PC-9 (cell line): ENCODE measurements at regions of chr15 and their contacts with region 1.

Region 1: GRCh38 chr15:67065444-67066093 is at the start of gene SMAD3:
- DNase-seq: peak; percentile 73 to 92
- H3K4me3 ChIP-seq: peak within 1 kb of the TSS; percentile 88
- H3K27ac ChIP-seq: peak within 1 kb of the TSS; percentile 87
- H3K4me1 ChIP-seq: peaks cover 21% of the 10 kb centered on the region
- H3K27me3 ChIP-seq: no peaks in the 10 kb centered on the region
- CTCF ChIP-seq: no peak
- total RNA-seq, gene SMAD3: 99.5 and 109 TPM in 2 replicates

Region 2: GRCh38 chr15:66298803-66299251 is 766.7 kb before region 1 on chr15:
- CTCF ChIA-PET with region 1: no interaction called
- POLR2A ChIA-PET with region 1: no interaction called
- intact Hi-C with region 1: no loop called
- DNase-seq: no peak
- H3K4me3 ChIP-seq: no peak overlapping the region
- H3K27ac ChIP-seq: no peak overlapping the region
- H3K4me1 ChIP-seq: peaks cover 16% of the 10 kb centered on the region
- H3K27me3 ChIP-seq: no peaks in the 10 kb centered on the region
- CTCF ChIP-seq: no peak

Region 3: GRCh38 chr15:66963711-66964110 is 101.9 kb before region 1 on chr15:
- CTCF ChIA-PET with region 1: no interaction called
- POLR2A ChIA-PET with region 1: interaction called, 11 read pairs
- intact Hi-C with region 1: no loop called
- DNase-seq: no peak
- H3K4me3 ChIP-seq: no peak overlapping the region
- H3K27ac ChIP-seq: no peak overlapping the region
- H3K4me1 ChIP-seq: no peaks in the 10 kb centered on the region
- H3K27me3 ChIP-seq: no peaks in the 10 kb centered on the region
- CTCF ChIP-seq: no peak

Region 4: GRCh38 chr15:67048281-67049279 is 17.0 kb before region 1 on chr15:
- CTCF ChIA-PET with region 1: no interaction called
- POLR2A ChIA-PET with region 1: interaction called, 8 read pairs
- intact Hi-C with region 1: loop called (anchors 1 kb)
- DNase-seq: peak; percentile 73 to 93
- H3K4me3 ChIP-seq: no peak overlapping the region
- H3K27ac ChIP-seq: peak overlapping the region; percentile 98
- H3K4me1 ChIP-seq: peaks cover 44% of the 10 kb centered on the region
- H3K27me3 ChIP-seq: no peaks in the 10 kb centered on the region
- CTCF ChIP-seq: no peak

Region 5: GRCh38 chr15:67120839-67121643 is 55.5 kb after region 1 on chr15:
- CTCF ChIA-PET with region 1: interaction called, 6 read pairs
- POLR2A ChIA-PET with region 1: interaction called, 8 read pairs
- intact Hi-C with region 1: loop called (anchors 5 kb)
- DNase-seq: peak in 1 of 2 experiments; percentile 56
- H3K4me3 ChIP-seq: no peak overlapping the region
- H3K27ac ChIP-seq: peak overlapping the region; percentile 98; the same call in 1 of the 2 replicates
- H3K4me1 ChIP-seq: peaks cover 76% of the 10 kb centered on the region
- H3K27me3 ChIP-seq: no peaks in the 10 kb centered on the region
- CTCF ChIP-seq: no peak

Region 6: DNA sequence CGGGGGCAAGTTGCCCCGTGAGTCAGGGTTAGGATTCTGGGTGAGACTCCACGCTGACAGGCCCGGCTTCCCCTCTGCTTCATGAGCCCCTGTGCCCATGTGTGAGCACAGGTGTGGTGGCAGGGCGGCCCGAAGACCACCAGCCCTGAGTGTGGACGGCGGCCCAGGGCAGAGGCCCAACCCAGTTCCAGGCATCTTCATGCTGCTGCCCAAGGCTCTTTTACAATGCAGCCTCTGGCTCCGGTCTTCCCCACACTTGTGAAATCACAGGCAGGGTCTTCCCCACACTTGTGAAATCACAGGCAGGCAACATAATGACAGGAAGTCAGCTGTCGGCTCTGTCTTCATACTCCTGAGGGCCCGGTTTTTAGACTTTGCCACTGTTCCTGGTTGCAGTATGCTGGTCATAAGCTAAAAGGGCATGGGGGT is 110.1 kb after region 1 on chr15:
- CTCF ChIA-PET with region 1: no interaction called
- POLR2A ChIA-PET with region 1: no interaction called
- intact Hi-C with region 1: loop called (anchors 1 kb)
- DNase-seq: no peak
- H3K4me3 ChIP-seq: no peak overlapping the region
- H3K27ac ChIP-seq: peak overlapping the region; percentile 85
- H3K4me1 ChIP-seq: peaks cover 60% of the 10 kb centered on the region
- H3K27me3 ChIP-seq: no peaks in the 10 kb centered on the region
- CTCF ChIP-seq: no peak